Activated CD4-positive, alpha-beta T cell treated with anti-CD3 and anti-CD28 coated beads, Interleukin-2, amount 10 ng/mL, durations not matched to agents 24 days and 14 days (primary cell): ENCODE measurements at regions of chr10 and their contacts with region 1.

Region 1: DNA sequence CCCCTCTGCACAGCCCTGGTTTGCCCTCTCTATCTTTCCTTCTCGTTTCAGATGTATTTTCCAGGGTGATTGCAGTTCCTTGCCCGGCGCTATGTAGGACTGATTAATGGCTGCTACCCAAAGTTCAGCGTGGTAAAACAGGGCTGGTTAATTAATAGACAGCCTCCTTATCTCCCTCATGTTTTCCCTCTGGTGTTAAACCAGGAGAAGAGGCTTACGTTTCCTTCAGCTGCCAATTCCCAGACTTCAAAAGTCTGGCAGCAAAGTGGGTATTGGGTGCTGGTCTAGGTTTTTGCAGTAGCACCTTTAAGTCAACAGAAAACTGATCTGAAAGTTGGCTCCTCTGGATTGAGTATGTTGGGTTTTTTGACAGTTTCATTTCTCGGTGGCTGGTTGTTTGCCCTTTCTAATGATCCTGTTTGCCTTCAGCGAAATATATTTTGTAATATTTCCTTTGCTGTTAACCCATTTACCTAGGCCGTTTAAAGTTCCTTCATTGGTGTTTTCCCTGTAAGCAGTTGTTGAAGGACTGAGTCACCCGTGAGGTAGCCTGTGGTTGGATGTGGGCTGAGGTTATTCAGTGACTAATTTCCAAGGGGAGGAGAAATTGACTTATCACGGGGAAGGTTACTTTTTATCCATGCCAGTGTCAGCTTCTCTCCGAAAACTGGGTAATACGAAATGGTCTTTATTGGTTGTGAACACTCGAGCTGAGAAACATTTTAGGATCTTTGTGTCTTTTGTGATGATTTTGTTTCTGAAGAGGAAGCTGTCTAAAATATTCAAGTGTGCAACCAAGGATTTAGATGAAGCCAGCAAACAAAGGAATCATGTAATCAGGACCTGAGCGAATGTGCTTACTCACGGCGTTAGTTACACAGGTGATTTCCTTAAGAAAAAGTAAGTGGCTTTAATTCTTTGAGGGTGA is 257.2 kb downstream of the KIAA1217 start:
- DNase-seq: peak; percentile 84
- H3K4me3 Mint-ChIP-seq: peak overlapping the region; percentile 75
- H3K27ac Mint-ChIP-seq: peak overlapping the region; percentile 86
- H3K4me1 Mint-ChIP-seq: peaks cover 46% of the 10 kb centered on the region
- H3K27me3 Mint-ChIP-seq: peaks cover 14% of the 10 kb centered on the region

Region 2: DNA sequence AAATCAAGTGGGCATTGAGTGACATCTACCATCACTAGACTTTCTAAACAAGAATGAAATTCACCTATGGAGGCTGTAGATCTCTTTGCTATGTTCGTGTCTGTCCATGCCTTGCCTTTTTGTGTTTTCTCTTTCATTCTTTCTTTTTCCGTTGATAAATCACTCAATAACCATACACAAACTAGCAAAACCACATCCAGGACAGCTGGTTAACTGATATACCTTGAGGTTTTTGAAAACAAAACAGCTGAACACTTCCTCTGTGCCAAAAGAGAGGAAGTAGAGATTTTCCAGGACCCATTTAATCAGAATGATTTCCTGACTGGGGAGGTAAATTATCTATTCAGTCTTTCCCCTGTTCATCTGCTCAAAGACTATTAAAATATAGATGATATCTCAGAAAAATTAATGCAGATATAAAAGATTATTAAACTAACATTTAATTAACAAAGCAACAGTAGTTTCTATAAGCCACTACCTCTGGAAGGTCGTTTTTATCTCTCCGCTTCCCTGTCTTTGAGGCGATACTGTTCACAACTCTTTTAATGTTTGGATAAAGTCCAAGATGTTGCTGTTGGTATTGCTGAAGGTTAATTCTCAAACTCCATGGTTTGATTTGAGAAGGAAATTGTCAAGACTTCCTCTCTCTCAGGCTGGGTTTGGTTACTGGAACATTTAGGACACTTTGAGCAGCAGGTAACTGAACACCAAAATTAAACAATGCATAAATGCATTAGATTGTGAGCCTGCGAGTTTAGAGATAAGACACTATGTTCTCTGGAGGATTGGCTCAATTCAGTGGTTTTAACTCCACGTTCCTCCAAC is 1097.1 kb before region 1 on chr10:
- intact Hi-C with region 1: loop called (anchors 10 kb)
- DNase-seq: peak; percentile 84
- H3K4me3 Mint-ChIP-seq: peak overlapping the region; percentile 58
- H3K27ac Mint-ChIP-seq: peak overlapping the region; percentile 81
- H3K4me1 Mint-ChIP-seq: peaks cover 57% of the 10 kb centered on the region
- H3K27me3 Mint-ChIP-seq: no peaks in the 10 kb centered on the region

Region 3: GRCh38 chr10:24383681-24384106 is 82.5 kb before region 1 on chr10:
- intact Hi-C with region 1: loop called (anchors 1 kb)
- DNase-seq: peak; percentile 80
- H3K4me3 Mint-ChIP-seq: no peak overlapping the region
- H3K27ac Mint-ChIP-seq: peak overlapping the region; percentile 90
- H3K4me1 Mint-ChIP-seq: peaks cover 12% of the 10 kb centered on the region
- H3K27me3 Mint-ChIP-seq: no peaks in the 10 kb centered on the region

Region 4: GRCh38 chr10:24603333-24603732 is 137.2 kb after region 1 on chr10:
- intact Hi-C with region 1: loop called (anchors 5 kb)
- DNase-seq: no peak
- H3K4me3 Mint-ChIP-seq: peak overlapping the region; percentile 32
- H3K27ac Mint-ChIP-seq: peak overlapping the region; percentile 85
- H3K4me1 Mint-ChIP-seq: peaks cover 27% of the 10 kb centered on the region
- H3K27me3 Mint-ChIP-seq: no peaks in the 10 kb centered on the region

Region 5: GRCh38 chr10:24920907-24921881 is 455.0 kb after region 1 on chr10:
- intact Hi-C with region 1: loop called (anchors 10 kb)
- DNase-seq: peak; percentile 77
- H3K4me3 Mint-ChIP-seq: peak overlapping the region; percentile 55
- H3K27ac Mint-ChIP-seq: peak overlapping the region; percentile 93
- H3K4me1 Mint-ChIP-seq: peaks cover 23% of the 10 kb centered on the region
- H3K27me3 Mint-ChIP-seq: no peaks in the 10 kb centered on the region